ENCODE measurements at regions of chr12 and their contacts with region 1.

Region 1: DNA sequence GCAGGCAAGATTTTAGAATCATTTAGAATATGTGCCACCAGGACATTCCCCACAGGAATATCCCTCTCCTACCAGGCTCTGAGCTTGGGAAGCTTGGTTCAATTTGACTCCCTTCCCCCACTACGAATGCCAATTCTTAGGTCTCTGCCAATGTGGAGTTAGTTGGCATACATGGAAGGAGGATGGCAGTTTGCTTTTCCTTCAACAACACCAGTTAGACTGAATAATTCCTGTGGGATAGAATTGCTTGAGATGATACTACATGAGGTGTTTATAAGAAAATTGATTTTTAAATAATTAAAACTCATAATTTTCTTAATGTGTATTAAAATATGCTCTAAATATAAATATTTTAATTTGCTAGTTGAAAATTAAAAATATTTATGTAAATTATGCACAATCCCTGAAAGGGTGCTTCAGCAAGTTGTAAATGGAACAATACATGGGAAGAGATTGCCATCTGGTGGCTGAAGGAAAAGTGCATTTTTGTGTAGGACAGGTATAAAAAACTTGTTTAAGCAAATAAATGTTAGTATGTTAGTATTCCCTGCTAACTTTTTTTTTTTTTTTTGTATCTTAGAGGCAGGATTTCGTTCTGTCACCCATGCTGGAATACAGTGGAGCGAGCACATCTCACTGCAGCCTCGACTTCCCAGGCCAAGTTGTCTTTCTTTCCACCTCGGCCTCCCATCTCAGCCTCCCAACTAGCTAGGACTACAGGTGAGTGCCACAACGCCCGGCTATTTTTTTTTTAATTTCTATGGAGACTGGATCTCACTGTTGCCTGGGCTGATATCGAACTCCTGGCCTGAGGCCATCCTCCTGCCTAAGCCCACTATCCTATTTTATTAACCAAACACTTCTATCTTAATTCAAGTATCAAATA is 25.8 kb upstream of the STRAP start:
- DNase-seq: peak; percentile 49 to 72 (median 55)
- ATAC-seq: peak; percentile 74
- H3K4me3 ChIP-seq: no peak overlapping the region
- H3K27ac ChIP-seq: no peak overlapping the region
- H3K4me1 ChIP-seq: no peaks in the 10 kb centered on the region
- H3K27me3 ChIP-seq: no peaks in the 10 kb centered on the region
- CTCF ChIP-seq: peak; percentile 28 to 96 (median 90)
- POLR2A ChIP-seq: no peak

Region 2: GRCh38 chr12:15276088-15276698 is 580.1 kb before region 1 on chr12:
- intact Hi-C with region 1: loop called (anchors 10 kb)
- DNase-seq: peak in 3 of 4 donors; percentile 23 to 31 (median 29)
- ATAC-seq: peak; percentile 45
- H3K4me3 ChIP-seq: no peak overlapping the region
- H3K27ac ChIP-seq: no peak overlapping the region
- H3K4me1 ChIP-seq: peaks cover 17% of the 10 kb centered on the region
- H3K27me3 ChIP-seq: no peaks in the 10 kb centered on the region
- CTCF ChIP-seq: peak; percentile 51 to 71 (median 69)
- POLR2A ChIP-seq: no peak

Region 3: DNA sequence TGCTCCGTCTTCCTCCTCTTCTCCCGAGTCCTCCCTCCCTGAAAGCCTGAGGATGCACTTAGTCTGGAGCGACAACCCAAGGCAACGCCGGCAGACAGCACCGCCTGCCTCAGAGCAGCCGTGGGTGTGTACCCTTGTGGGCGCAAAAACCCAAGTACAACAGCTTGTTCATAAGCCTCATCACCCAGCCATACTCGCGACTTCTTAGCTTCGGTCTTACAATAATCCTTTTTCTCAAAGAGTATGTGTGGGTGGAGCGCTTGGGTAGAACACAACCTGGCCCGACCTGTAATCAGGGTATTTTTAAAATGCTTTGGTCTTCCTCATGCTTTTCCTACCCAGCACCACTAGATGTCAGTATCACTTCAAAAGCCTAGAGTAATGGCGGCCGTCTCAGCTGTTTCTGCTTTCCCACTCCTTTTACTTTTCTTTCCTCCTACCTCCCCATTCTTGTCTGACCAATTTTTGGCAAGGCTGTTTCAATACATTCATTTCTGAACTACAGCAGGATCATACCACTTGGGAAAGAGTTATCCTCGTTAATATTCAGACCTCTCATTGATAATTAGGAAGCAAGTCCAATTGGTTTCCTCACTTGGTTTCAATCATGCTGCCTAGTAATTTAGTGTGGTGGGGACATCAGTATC is 266.0 kb before region 1 on chr12:
- intact Hi-C with region 1: loop called (anchors 5 kb)
- DNase-seq: peak; percentile 52 to 74 (median 61)
- ATAC-seq: peak; percentile 98
- H3K4me3 ChIP-seq: no peak overlapping the region
- H3K27ac ChIP-seq: no peak overlapping the region
- H3K4me1 ChIP-seq: peaks cover 9% of the 10 kb centered on the region
- H3K27me3 ChIP-seq: no peaks in the 10 kb centered on the region
- CTCF ChIP-seq: peak; percentile 72 to 99 (median 95)
- POLR2A ChIP-seq: no peak

Region 4: DNA sequence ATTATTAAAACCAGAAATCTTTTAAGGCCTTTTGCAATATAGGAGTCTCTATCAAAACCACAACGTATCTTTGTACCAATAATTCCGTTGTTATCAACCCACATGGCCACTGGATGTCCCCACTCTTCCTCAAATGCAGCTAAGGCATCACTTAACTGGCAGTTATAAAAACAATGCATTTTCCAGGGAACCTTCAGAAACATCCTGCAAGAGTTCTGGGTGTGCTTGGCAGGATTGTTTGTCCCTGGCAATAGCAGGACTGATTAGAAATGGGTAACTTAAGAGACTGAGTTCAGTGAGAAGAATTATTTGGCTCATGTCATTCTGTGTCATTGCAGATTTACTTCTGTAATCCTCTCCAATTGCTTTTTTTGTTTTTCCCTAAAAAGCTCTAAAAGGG is 309.2 kb after region 1 on chr12:
- intact Hi-C with region 1: no loop called
- DNase-seq: peak; percentile 20 to 55 (median 50)
- ATAC-seq: peak; percentile 50
- H3K4me3 ChIP-seq: no peak overlapping the region
- H3K27ac ChIP-seq: no peak overlapping the region
- H3K4me1 ChIP-seq: no peaks in the 10 kb centered on the region
- H3K27me3 ChIP-seq: no peaks in the 10 kb centered on the region
- CTCF ChIP-seq: peak in 6 of 7 experiments; percentile 15 to 71 (median 46)
- POLR2A ChIP-seq: no peak